Colonic mucosa (tissue), 4 donors: ENCODE measurements at regions of chr1 and their contacts with region 1.

Region 1: GRCh38 chr1:8314346-8315280 is 3.3 kb upstream of the SLC45A1 start:
- DNase-seq: peak; percentile 85
- H3K4me3 ChIP-seq: no peak overlapping the region
- H3K27ac ChIP-seq: no peak overlapping the region
- H3K4me1 ChIP-seq: peaks cover 5% of the 10 kb centered on the region
- H3K27me3 ChIP-seq: peaks cover 8% of the 10 kb centered on the region
- CTCF ChIP-seq: peak; percentile 77

Region 2: DNA sequence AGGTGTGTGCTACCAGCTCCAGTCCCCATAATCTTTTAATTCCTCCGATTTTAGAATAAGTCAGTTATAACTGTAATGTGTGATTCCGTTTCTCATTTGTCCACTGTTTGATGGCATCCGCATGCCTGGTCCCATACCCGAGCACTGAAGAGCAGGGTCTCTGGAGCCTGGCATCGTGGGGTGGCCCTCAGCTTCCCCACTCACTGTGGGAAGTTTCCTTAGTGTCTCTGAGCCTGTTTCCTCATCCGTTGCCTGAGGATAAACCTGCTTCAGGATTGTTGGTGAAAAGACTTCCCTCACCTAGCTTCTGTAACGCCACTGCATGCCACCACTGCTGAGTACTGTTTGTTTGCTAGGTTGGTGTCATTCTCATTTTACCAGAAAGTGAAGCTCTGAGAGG is 333.6 kb before region 1 on chr1:
- intact Hi-C with region 1: loop called (anchors 2 kb)
- DNase-seq: no peak
- H3K4me3 ChIP-seq: no peak overlapping the region
- H3K27ac ChIP-seq: no peak overlapping the region
- H3K4me1 ChIP-seq: no peaks in the 10 kb centered on the region
- H3K27me3 ChIP-seq: no peaks in the 10 kb centered on the region
- CTCF ChIP-seq: no peak

Region 3: DNA sequence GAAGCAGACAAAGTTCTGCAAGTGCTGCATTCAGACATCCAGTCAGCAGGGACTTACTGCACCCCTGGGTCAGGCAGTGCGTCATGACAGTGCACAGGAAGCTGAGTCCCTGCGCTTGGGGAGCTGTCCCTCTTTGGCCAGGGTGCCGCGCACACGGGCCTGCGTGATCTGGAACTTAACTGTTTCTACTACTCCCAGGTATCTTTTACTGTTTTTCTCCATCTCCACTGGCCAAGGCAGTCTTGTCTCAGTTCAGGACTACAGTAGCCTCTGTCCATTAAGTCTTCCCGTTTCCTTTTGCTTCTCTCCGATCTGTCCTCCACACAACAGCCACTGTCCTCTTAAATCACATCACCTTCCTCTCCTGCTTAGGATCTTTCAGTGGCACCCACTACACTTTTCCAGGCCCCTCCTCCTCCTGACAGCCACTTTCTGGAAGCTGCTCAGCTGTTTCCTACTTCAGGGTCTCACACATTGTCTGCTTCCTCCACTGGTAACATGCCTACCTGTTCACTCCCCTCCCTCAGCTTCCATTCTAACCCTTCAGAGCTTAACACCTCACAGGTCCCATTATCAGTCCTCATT is 304.4 kb before region 1 on chr1:
- intact Hi-C with region 1: loop called (anchors 5 kb)
- DNase-seq: no peak
- H3K4me3 ChIP-seq: no peak overlapping the region
- H3K27ac ChIP-seq: no peak overlapping the region
- H3K4me1 ChIP-seq: peaks cover under 1% of the 10 kb centered on the region
- H3K27me3 ChIP-seq: no peaks in the 10 kb centered on the region
- CTCF ChIP-seq: no peak

Region 4: DNA sequence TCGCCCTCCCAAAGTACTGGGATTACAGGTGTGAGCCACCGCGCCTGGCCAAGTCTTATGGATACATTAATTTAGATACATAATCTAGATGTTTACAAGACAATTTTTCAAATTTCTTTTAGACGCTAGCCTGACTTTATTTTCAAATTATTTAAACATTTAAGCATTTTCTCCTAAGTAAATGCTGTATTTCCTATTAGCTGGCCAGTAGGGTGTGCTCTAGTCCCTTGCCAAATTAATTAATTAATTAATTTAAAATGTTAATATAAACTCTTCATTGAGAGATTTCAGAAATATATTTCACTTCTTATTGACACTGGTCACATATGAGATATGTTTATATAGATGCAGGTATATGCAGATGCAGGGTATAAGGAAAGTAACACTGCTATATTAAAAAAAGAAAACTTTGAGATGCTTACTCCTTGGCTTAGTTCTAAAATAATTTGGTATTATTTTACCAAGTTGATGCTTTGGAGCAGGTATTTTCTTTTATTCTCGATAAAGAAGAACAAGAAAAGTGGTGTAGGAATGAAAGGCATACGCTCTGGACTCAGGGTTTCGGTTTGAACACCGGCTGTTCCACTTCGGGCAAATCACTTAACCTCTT is 283.3 kb before region 1 on chr1:
- intact Hi-C with region 1: loop called (anchors 2 kb)
- DNase-seq: no peak
- H3K4me3 ChIP-seq: no peak overlapping the region
- H3K27ac ChIP-seq: no peak overlapping the region
- H3K4me1 ChIP-seq: peaks cover 4% of the 10 kb centered on the region
- H3K27me3 ChIP-seq: no peaks in the 10 kb centered on the region
- CTCF ChIP-seq: peak; percentile 53

Region 5: DNA sequence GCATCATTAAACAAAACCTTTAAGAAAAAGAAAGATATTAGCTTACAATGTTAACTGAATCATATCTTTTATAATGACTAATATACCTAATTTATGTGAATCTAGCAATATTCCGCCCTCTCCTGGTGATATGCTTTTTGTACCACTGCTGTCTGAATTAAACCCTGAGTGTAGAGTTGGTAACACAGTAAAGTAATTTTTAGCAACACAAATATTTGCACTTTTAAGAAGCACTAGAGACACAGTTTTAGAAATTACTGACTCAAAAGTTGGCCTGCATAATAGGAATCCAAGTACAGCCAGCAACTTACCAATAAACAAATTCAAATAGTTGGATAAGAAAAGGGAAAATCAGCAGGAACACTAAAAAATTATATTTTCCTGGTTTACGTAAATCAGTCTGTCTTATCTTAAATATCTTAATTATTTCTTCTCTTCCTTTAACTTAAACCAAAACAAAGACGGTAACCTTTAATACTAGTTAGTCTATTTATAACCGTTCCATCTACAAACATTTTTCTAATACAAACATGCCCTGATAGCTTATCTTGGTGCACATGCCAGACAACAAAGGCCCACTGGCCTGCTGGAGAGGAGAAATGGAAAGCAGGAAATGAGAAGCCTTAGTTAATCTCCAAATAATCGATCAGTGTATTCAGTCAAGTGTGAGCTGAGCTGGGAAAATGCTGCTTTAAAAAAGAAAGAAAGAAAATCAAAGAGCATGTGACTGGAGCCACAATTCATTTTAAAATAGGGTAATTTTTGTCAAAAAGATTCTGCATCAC is 256.8 kb after region 1 on chr1:
- intact Hi-C with region 1: no loop called
- DNase-seq: no peak
- H3K4me3 ChIP-seq: no peak overlapping the region
- H3K27ac ChIP-seq: peak overlapping the region; percentile 6
- H3K4me1 ChIP-seq: no peaks in the 10 kb centered on the region
- H3K27me3 ChIP-seq: no peaks in the 10 kb centered on the region
- CTCF ChIP-seq: no peak